MCF 10A (cell line): ENCODE measurements at regions of chr15 and their contacts with region 1.

Region 1: GRCh38 chr15:93974804-93975481 is 256.4 kb upstream of the MCTP2 start:
- DNase-seq: peak; percentile 70
- H3K4me3 Mint-ChIP-seq: no peak overlapping the region
- H3K27ac Mint-ChIP-seq: no peak overlapping the region
- H3K4me1 Mint-ChIP-seq: no peaks in the 10 kb centered on the region
- H3K27me3 Mint-ChIP-seq: no peaks in the 10 kb centered on the region
- CTCF ChIP-seq: peak; percentile 67

Region 2: GRCh38 chr15:93399121-93399520 is 575.8 kb before region 1 on chr15:
- CTCF ChIA-PET with region 1: interaction called, 4 read pairs
- POLR2A ChIA-PET with region 1: no interaction called
- intact Hi-C with region 1: loop called (anchors 2 kb)
- DNase-seq: peak; percentile 6
- H3K4me3 Mint-ChIP-seq: no peak overlapping the region
- H3K27ac Mint-ChIP-seq: no peak overlapping the region
- H3K4me1 Mint-ChIP-seq: no peaks in the 10 kb centered on the region
- H3K27me3 Mint-ChIP-seq: no peaks in the 10 kb centered on the region
- CTCF ChIP-seq: no peak